Aorta (tissue), 5 donors: ENCODE measurements at regions of chr2 and their contacts with region 1.

Region 1: DNA sequence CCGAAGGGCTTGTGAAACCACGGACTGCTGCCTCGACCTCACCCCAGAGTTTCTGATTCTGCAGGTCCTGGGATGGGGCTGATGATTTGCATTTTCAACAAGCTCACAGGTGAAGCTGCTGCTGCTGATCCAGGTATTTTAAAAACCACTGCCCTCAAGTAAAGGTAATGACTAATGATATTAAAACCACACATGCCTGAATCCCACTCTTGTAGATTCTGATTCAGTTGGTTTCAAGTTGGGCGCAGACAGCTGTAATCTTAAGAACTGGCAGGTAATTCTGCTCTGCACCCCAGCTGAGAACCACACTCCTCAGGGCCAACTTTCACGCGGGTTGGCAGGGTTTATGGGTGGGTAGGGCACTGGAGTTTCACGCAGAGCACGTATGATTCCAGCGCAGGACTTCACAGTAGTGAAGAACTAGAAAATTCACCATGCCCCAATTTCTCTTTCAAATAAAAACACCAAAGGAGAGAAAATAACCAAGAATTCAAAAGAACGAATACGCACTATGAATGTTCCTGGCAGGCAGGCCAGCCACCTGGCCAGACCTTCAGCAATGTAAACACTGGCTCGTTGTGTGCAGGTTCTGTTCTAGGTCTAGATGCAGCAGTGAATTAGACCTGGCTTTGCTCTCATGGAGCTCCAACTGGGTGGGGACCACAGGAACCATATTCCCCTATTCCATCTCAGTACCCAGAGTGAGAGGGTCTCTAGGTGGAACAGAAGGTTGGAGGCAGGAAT is 74.6 kb upstream of the ZFP36L2 start:
- DNase-seq: no peak
- ATAC-seq: no peak
- H3K4me3 ChIP-seq: no peak overlapping the region
- H3K27ac ChIP-seq: peak overlapping the region; percentile 44 to 93
- H3K4me1 ChIP-seq: peaks cover 7 to 19% of the 10 kb centered on the region in 2 donors
- H3K27me3 ChIP-seq: no peaks in the 10 kb centered on the region

Region 2: DNA sequence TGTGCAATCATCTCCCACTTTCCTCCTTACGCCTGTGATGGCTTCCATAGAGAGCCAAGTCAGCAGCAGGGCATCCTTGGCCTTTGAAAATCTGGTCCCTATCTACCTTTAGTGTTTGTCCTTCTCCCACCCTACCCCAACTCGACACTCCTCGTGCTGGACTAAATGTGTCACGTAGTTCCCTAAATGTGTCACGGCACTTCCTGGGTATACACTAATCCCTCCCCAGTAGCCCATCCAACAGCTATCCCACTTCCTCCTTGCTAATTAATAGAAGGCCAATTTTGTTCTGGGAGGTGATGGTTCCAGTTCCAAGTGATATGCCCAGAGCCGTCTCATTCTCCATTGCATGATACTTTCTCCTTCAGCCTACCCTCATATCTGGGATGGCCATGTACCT is 38.1 kb before region 1 on chr2:
- intact Hi-C with region 1: loop called in 1 of 2 experiments (anchors 5 kb)
- DNase-seq: no peak
- ATAC-seq: no peak
- H3K4me3 ChIP-seq: no peak overlapping the region
- H3K27ac ChIP-seq: no peak overlapping the region
- H3K4me1 ChIP-seq: peaks cover 0 to 5% of the 10 kb centered on the region in 2 donors
- H3K27me3 ChIP-seq: no peaks in the 10 kb centered on the region